Activated naive CD4-positive, alpha-beta T cell treated with anti-CD3 and anti-CD28 coated beads, Interleukin-2, amount 10 ng/mL, durations not matched to agents 7 days and 5 days (primary cell): ENCODE measurements at regions of chr1 and their contacts with region 1.

Region 1: DNA sequence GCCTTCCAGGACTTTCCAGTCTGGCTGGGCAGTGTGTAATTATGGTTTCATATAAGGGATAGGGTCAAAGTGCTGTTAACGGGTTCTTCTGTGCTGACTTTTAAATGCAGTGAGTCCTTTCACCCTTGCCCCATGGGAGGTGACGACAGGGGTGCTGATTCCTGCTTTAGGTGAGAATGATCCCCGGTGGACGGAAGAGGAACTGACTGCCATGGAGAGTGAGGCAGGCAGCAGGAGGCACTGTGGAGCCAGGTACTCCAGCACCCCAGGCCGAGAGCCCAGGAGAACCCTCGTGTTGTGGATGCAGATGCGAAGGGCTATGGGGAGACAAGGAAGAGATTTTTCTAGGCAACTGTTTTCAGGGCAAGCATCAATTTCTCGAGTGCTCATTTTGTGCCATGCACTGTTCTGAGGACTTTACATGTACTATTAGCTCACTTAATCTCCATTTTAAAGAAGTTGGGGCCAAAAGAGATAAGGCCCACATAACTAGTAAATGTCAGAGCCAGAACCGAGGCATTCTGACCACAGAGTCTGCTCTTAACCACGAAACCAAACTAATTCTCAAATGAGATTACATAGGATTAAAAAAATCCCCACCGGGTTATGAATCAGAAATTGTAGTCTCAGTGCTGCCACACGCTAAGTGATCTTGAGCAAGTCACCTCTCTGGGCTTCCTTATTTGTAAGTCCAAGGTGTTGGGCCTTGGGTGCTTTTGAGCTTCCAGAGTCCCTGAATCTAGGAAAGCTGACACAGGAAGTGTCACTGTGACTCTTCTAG is 28.2 kb downstream of the STPG1 start:
- DNase-seq: peak; percentile 50
- H3K4me3 Mint-ChIP-seq: no peak overlapping the region
- H3K27ac Mint-ChIP-seq: peak overlapping the region; percentile 30
- H3K4me1 Mint-ChIP-seq: peaks cover 28% of the 10 kb centered on the region
- H3K27me3 Mint-ChIP-seq: no peaks in the 10 kb centered on the region

Region 2: GRCh38 chr1:24321697-24322469 is 63.5 kb before region 1 on chr1:
- CTCF ChIA-PET with region 1: interaction called, 11 read pairs
- DNase-seq: peak; percentile 85
- H3K4me3 Mint-ChIP-seq: peak overlapping the region; percentile 69
- H3K27ac Mint-ChIP-seq: peak overlapping the region; percentile 75
- H3K4me1 Mint-ChIP-seq: peaks cover 48% of the 10 kb centered on the region
- H3K27me3 Mint-ChIP-seq: peaks cover 100% of the 10 kb centered on the region

Region 3: GRCh38 chr1:24364975-24365678 is 20.2 kb before region 1 on chr1:
- CTCF ChIA-PET with region 1: interaction called, 10 read pairs
- DNase-seq: peak; percentile 25
- H3K4me3 Mint-ChIP-seq: no peak overlapping the region
- H3K27ac Mint-ChIP-seq: no peak overlapping the region
- H3K4me1 Mint-ChIP-seq: peaks cover 8% of the 10 kb centered on the region
- H3K27me3 Mint-ChIP-seq: peaks cover 6% of the 10 kb centered on the region

Region 4: GRCh38 chr1:24978383-24979032 is 593.2 kb after region 1 on chr1:
- CTCF ChIA-PET with region 1: no interaction called
- DNase-seq: no peak
- H3K4me3 Mint-ChIP-seq: no peak overlapping the region
- H3K27ac Mint-ChIP-seq: peak overlapping the region; percentile 70
- H3K4me1 Mint-ChIP-seq: peaks cover 84% of the 10 kb centered on the region
- H3K27me3 Mint-ChIP-seq: no peaks in the 10 kb centered on the region